Right ventricle myocardium inferior (tissue), 1 donor: ENCODE measurements at regions of chr19 and their contacts with region 1.

Region 1: GRCh38 chr19:16988661-16989060 is 37.9 kb downstream of the CPAMD8 start:
- DNase-seq: no peak
- ATAC-seq: no peak

Region 2: GRCh38 chr19:17041976-17042375 is 53.3 kb after region 1 on chr19:
- intact Hi-C with region 1: loop called (anchors 2 kb)
- DNase-seq: no peak
- ATAC-seq: peak; percentile 46